Tibial artery (tissue), 4 donors: ENCODE measurements at regions of chr4 and their contacts with region 1.

Region 1: DNA sequence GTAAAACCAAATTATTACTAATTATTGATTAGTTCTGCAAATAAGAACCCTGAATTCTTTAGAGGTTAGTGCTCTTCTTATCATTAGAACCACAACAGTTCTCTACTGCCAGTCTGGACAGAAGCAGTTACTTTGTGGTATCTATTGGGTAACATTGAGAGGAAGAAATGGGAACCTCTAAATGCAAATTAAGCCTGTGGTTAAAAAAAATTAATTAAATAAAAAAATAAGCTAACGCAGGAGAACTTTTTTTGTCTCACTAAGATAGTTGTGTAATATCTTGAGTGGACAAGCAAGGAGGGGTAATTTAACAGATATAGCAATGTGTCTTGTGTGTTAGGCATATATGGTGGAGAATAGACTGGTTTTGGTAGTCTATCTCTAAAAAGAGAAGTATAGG is 32.9 kb upstream of the TET2 start:
- DNase-seq: no peak
- H3K4me3 ChIP-seq: no peak overlapping the region
- H3K27ac ChIP-seq: no peak overlapping the region
- H3K4me1 ChIP-seq: no peaks in the 10 kb centered on the region
- H3K27me3 ChIP-seq: no peaks in the 10 kb centered on the region
- CTCF ChIP-seq: no peak

Region 2: DNA sequence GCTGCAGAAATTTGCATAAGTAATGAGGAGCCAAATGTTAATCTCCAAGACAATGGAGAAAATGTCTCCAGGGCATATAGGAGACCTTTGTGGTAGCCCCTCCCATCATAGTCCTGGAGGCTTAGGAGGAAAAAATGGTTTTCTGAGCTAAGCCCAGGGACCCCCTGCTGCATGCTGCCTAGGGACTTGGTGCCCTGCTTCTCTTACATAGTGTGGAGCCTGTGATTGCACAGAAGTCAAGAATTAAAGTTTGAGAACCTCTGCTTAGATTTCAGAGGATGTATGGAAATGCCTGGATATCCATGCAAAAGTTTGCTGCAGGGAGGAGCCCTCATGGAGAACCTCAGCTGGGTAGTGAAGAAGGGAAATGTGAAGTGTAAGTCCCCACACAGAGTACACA is 1014.7 kb before region 1 on chr4:
- intact Hi-C with region 1: loop called (anchors 10 kb)
- DNase-seq: no peak
- H3K4me3 ChIP-seq: no peak overlapping the region
- H3K27ac ChIP-seq: no peak overlapping the region
- H3K4me1 ChIP-seq: no peaks in the 10 kb centered on the region
- H3K27me3 ChIP-seq: no peaks in the 10 kb centered on the region
- CTCF ChIP-seq: no peak